Caco-2 (cell line): ENCODE measurements at regions of chr4 and their contacts with region 1.

Region 1: DNA sequence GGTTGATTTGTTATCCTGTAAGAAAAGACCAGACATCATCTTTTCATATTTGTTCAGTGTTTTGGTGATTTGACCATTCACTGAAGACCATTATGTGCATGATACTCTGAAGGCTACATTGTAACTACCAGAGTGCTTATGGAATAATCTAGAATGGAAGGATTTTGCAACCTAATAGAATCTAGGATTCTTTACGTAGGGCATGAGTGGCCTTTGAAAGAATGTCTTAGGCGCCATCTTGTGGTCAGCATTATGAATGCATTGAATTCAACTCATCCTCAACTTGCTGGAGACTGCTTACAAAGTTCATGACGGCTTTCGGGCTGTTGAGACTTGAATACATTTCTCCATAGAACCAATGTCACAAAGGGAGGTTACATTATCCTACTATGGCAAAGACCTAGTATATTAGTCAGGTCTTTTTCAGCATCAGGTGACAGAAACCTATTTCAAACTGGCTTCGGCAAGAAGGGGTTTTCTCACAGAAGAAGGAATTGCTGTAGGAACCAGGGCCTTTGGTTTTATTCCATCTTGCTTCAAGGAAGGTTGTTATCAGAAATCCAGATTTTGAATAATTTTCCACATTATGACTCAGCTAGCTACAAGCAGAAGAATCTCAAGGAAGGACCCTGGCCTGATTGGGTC is 104.1 kb downstream of the GPAT3 start:
- DNase-seq: peak; percentile 53 to 64
- H3K4me3 ChIP-seq: no peak overlapping the region
- H3K4me3 Mint-ChIP-seq: no peak overlapping the region
- H3K27ac Mint-ChIP-seq: no peak overlapping the region
- H3K4me1 ChIP-seq: no peaks in the 10 kb centered on the region
- H3K4me1 Mint-ChIP-seq: peaks cover 6% of the 10 kb centered on the region
- H3K27me3 ChIP-seq: no peaks in the 10 kb centered on the region
- H3K27me3 Mint-ChIP-seq: peaks cover 2% of the 10 kb centered on the region
- CTCF ChIP-seq: peak; percentile 53 to 69

Region 2: DNA sequence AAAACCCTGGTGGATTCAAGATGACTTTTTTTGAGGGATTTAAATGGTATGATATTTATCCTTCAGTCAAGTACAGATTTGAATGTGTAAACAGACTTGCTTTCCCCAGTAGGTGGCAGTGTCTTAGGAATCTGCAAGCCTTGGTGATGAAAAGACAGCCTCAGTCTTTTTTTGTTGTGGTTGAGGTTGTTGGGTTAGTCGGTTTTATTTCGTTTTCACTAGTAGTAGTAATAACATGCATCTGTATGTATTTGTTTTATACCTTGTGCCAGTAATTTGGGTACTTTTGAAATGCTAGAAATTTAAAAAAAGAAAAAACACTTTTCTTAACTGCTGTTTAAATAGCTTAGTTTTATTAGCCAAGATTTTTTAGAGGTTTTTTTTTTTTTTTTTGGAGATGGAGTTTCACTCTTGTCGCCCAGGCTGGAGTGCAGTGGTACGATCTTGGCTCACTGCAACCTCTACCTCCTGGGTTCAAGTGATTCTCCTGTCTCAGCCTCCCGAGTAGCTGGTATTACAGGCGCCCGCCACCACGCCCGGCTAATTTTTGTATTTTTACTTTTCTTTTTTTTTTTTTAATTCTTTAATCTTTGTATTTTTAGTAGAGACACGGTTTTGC is 565.8 kb before region 1 on chr4:
- CTCF ChIA-PET with region 1: no interaction called
- POLR2A ChIA-PET with region 1: no interaction called
- intact Hi-C with region 1: loop called (anchors 5 kb)
- DNase-seq: peak; percentile 46 to 66
- H3K4me3 ChIP-seq: no peak overlapping the region
- H3K4me3 Mint-ChIP-seq: no peak overlapping the region
- H3K27ac Mint-ChIP-seq: no peak overlapping the region
- H3K4me1 ChIP-seq: no peaks in the 10 kb centered on the region
- H3K4me1 Mint-ChIP-seq: no peaks in the 10 kb centered on the region
- H3K27me3 ChIP-seq: no peaks in the 10 kb centered on the region
- H3K27me3 Mint-ChIP-seq: no peaks in the 10 kb centered on the region
- CTCF ChIP-seq: peak; percentile 43 to 55

Region 3: GRCh38 chr4:83362492-83363329 is 277.3 kb before region 1 on chr4:
- CTCF ChIA-PET with region 1: interaction called, 3 read pairs
- POLR2A ChIA-PET with region 1: no interaction called
- intact Hi-C with region 1: loop called (anchors 1 kb)
- DNase-seq: peak in 1 of 2 experiments; percentile 13
- H3K4me3 ChIP-seq: no peak overlapping the region
- H3K4me3 Mint-ChIP-seq: no peak overlapping the region
- H3K27ac Mint-ChIP-seq: no peak overlapping the region
- H3K4me1 ChIP-seq: peaks cover 13% of the 10 kb centered on the region
- H3K4me1 Mint-ChIP-seq: peaks cover 12% of the 10 kb centered on the region
- H3K27me3 ChIP-seq: no peaks in the 10 kb centered on the region
- H3K27me3 Mint-ChIP-seq: no peaks in the 10 kb centered on the region
- CTCF ChIP-seq: peak in 1 of 2 experiments; percentile 36

Region 4: DNA sequence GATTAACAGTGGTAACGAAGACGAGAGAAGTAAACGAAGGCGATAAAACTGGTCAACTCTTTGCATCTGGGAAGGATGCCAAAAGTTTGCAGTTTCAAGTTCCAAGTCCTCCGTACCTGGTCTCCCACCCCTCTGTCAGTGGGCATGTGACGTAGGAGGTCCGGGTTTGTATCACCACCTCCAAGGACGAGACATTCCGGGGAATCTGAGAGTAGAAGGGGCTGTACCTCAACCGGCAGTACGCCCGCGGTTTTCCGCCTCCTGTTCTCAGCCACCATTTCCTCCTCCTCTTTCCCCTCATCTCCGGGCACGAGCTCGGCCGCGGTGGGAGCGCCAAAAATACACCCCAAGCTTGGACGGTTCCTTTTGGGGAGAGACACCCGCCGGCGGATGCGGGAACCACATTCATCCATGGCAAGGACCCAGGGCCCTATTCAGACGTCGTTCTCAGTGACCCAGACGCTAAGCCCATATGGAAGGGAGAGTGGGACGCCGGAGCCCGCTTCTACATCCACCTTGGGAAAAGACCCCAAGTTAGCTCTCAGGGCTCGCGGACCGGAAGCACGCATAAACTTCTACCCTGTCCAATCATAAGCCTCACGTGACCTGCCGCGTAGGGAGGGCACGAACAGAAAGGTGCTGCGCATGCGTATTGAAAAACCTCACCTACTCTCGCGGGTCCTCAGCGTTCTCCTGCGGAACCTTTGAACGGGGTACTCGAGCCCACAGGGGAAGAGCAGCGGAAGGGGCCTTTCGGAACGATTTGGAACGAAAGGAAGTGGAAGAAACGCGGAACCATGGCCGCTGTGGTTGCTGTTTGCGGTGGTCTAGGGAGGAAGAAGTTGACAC is 184.5 kb before region 1 on chr4 and contains the starts of genes HELQ and MRPS18C:
- CTCF ChIA-PET with region 1: no interaction called
- POLR2A ChIA-PET with region 1: no interaction called
- intact Hi-C with region 1: loop called (anchors 1 kb)
- DNase-seq: peak; percentile 93 to 97
- H3K4me3 ChIP-seq: peak within 1 kb of the TSS; percentile 61
- H3K4me3 Mint-ChIP-seq: peak within 1 kb of the TSS; percentile 90
- H3K27ac Mint-ChIP-seq: peak within 1 kb of the TSS; percentile 92
- H3K4me1 ChIP-seq: no peaks in the 10 kb centered on the region
- H3K4me1 Mint-ChIP-seq: no peaks in the 10 kb centered on the region
- H3K27me3 ChIP-seq: no peaks in the 10 kb centered on the region
- H3K27me3 Mint-ChIP-seq: no peaks in the 10 kb centered on the region
- CTCF ChIP-seq: no peak
- total RNA-seq, gene HELQ: 10.6 and 11.6 TPM in 2 replicates
- total RNA-seq, gene MRPS18C: 68.7 and 74.1 TPM in 2 replicates

Region 5: DNA sequence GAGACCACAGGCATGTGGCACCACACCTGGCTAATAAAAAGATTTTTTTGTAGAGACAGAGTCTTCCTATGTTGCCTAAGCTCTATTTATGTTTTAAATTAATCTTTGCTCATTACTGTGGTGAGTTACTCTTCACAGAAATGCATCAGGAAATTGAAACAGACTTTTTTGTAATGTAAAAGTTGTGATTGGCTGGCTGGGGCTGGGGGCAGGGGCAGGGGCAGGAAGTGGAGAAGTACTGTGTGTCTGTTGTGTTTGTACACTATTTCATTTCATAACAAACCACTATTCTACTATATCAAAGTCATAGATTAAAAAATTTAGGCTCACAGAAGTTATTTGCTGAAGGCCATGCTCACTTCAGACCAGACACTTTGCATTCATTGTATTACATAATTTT is 136.0 kb before region 1 on chr4:
- CTCF ChIA-PET with region 1: no interaction called
- POLR2A ChIA-PET with region 1: no interaction called
- intact Hi-C with region 1: loop called (anchors 1 kb)
- DNase-seq: no peak
- H3K4me3 ChIP-seq: no peak overlapping the region
- H3K4me3 Mint-ChIP-seq: no peak overlapping the region
- H3K27ac Mint-ChIP-seq: no peak overlapping the region
- H3K4me1 ChIP-seq: no peaks in the 10 kb centered on the region
- H3K4me1 Mint-ChIP-seq: no peaks in the 10 kb centered on the region
- H3K27me3 ChIP-seq: no peaks in the 10 kb centered on the region
- H3K27me3 Mint-ChIP-seq: no peaks in the 10 kb centered on the region
- CTCF ChIP-seq: no peak

Region 6: GRCh38 chr4:83626245-83626836 is 13.6 kb before region 1 on chr4:
- CTCF ChIA-PET with region 1: no interaction called
- POLR2A ChIA-PET with region 1: no interaction called
- intact Hi-C with region 1: no loop called
- DNase-seq: no peak
- H3K4me3 ChIP-seq: no peak overlapping the region
- H3K4me3 Mint-ChIP-seq: no peak overlapping the region
- H3K27ac Mint-ChIP-seq: no peak overlapping the region
- H3K4me1 ChIP-seq: peaks cover 6% of the 10 kb centered on the region; the same call in 1 of the 2 replicates
- H3K4me1 Mint-ChIP-seq: no peaks in the 10 kb centered on the region
- H3K27me3 ChIP-seq: no peaks in the 10 kb centered on the region
- H3K27me3 Mint-ChIP-seq: no peaks in the 10 kb centered on the region
- CTCF ChIP-seq: no peak

Region 7: DNA sequence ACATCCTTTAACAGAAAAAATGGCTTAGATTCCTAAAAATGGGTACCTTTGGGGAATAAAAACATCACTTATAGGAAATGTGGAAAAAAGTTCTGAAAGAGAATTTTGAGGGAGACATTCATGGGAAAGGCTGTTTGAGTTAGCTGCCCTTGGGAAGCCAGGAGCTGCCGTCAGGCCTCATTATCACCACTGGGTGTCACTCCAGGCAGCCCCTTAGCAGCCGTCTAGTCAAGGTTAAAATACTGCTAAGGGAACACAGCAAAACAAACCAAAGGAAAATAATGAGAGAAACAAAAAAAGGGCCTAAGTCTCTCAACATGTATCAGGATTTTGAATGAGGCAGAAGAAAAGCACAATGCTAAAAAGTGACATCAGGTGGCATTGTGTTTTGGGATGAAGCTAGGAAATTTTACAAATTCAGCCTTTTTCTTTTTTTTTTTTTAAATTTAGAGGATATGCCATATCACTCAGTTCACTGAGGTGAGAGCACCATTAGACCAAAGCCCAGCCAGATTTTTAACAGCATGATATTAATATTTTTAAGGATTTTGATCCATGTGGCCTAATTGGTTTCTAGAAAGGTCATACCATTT is 131.2 kb after region 1 on chr4:
- CTCF ChIA-PET with region 1: interaction called, 3 read pairs
- POLR2A ChIA-PET with region 1: no interaction called
- intact Hi-C with region 1: loop called (anchors 1 kb)
- DNase-seq: peak; percentile 54 to 60
- H3K4me3 ChIP-seq: no peak overlapping the region
- H3K4me3 Mint-ChIP-seq: no peak overlapping the region
- H3K27ac Mint-ChIP-seq: no peak overlapping the region
- H3K4me1 ChIP-seq: no peaks in the 10 kb centered on the region
- H3K4me1 Mint-ChIP-seq: no peaks in the 10 kb centered on the region
- H3K27me3 ChIP-seq: no peaks in the 10 kb centered on the region; the same call in 1 of the 2 replicates
- H3K27me3 Mint-ChIP-seq: peaks cover 6% of the 10 kb centered on the region
- CTCF ChIP-seq: peak; percentile 41 to 80